OCI-LY7 (cell line): ENCODE measurements at regions of chr5 and their contacts with region 1.

Region 1: GRCh38 chr5:107513337-107514085 is 157.2 kb downstream of the EFNA5 start:
- DNase-seq: peak; percentile 95
- H3K4me3 ChIP-seq: peak overlapping the region; percentile 56
- H3K27ac ChIP-seq: peak overlapping the region; percentile 99
- H3K4me1 ChIP-seq: peaks cover 91% of the 10 kb centered on the region
- CTCF ChIP-seq: no peak; the same call in 1 of the 2 replicates

Region 2: DNA sequence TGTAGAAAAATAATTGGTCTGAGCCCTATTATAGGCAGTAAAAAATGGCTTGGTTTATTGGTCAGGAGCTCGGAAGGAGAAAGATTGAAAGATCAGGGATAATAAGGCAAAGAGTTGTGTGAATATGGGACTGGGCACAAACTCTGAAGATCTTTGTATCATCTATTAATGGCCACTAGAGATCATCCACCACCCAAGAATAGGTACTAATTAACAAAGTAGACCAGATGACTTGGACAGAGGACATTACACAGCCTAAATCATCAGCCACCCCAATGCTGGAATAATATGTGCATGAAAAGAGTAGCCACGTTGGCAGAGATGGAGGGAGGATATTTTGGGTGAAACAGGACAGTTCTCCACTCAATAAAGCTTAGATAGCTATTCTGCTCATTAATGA is 206.9 kb before region 1 on chr5:
- CTCF ChIA-PET with region 1: interaction called, 3 read pairs
- POLR2A ChIA-PET with region 1: no interaction called
- intact Hi-C with region 1: loop called (anchors 5 kb)
- DNase-seq: peak; percentile 13
- H3K4me3 ChIP-seq: no peak overlapping the region
- H3K27ac ChIP-seq: no peak overlapping the region
- H3K4me1 ChIP-seq: peaks cover 18% of the 10 kb centered on the region
- CTCF ChIP-seq: no peak

Region 3: DNA sequence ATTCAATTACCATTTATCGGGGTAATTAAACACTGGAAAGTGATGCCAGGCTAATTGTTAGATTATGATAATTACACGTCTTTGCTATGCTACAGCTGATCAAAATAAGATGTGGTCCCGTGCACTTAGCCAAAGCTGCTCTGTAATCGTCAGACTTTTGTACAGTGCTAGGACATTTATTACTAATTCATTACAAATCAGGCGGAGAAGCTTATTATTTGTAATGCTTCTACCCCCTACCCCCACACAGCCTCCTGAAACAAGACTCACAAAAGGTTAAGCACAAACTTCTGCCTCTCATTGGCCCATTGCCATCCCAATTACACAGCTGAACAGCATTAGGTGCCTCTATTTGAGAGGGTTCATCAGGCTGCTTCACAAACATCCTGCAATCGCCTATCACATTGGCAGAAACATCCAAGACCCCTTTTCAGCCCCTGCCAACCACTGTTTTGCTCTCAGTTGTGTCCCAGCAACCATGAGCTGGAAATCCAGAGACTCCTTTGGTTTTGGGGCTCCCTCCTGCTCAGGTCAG is 75.5 kb before region 1 on chr5:
- CTCF ChIA-PET with region 1: no interaction called
- POLR2A ChIA-PET with region 1: interaction called, 11 read pairs
- intact Hi-C with region 1: no loop called
- DNase-seq: no peak
- H3K4me3 ChIP-seq: no peak overlapping the region
- H3K27ac ChIP-seq: no peak overlapping the region
- H3K4me1 ChIP-seq: peaks cover 24% of the 10 kb centered on the region
- CTCF ChIP-seq: no peak

Region 4: GRCh38 chr5:107466233-107466769 is 47.2 kb before region 1 on chr5:
- CTCF ChIA-PET with region 1: no interaction called
- POLR2A ChIA-PET with region 1: interaction called, 19 read pairs
- intact Hi-C with region 1: loop called (anchors 1 kb)
- DNase-seq: no peak
- H3K4me3 ChIP-seq: no peak overlapping the region
- H3K27ac ChIP-seq: no peak overlapping the region
- H3K4me1 ChIP-seq: peaks cover 78% of the 10 kb centered on the region
- CTCF ChIP-seq: no peak

Region 5: GRCh38 chr5:107564896-107565512 is 51.5 kb after region 1 on chr5:
- CTCF ChIA-PET with region 1: interaction called, 33 read pairs
- POLR2A ChIA-PET with region 1: interaction called, 154 read pairs
- intact Hi-C with region 1: no loop called
- DNase-seq: no peak
- H3K4me3 ChIP-seq: no peak overlapping the region
- H3K27ac ChIP-seq: no peak overlapping the region
- H3K4me1 ChIP-seq: peaks cover 39% of the 10 kb centered on the region
- CTCF ChIP-seq: no peak